MCF 10A (cell line): ENCODE measurements at regions of chr13 and their contacts with region 1.

Region 1: GRCh38 chr13:59906413-59907049 is 257.2 kb downstream of the DIAPH3 start:
- DNase-seq: peak; percentile 43
- H3K4me3 Mint-ChIP-seq: no peak overlapping the region
- H3K27ac Mint-ChIP-seq: no peak overlapping the region
- H3K4me1 Mint-ChIP-seq: peaks cover 6% of the 10 kb centered on the region
- H3K27me3 Mint-ChIP-seq: no peaks in the 10 kb centered on the region
- CTCF ChIP-seq: peak; percentile 50

Region 2: DNA sequence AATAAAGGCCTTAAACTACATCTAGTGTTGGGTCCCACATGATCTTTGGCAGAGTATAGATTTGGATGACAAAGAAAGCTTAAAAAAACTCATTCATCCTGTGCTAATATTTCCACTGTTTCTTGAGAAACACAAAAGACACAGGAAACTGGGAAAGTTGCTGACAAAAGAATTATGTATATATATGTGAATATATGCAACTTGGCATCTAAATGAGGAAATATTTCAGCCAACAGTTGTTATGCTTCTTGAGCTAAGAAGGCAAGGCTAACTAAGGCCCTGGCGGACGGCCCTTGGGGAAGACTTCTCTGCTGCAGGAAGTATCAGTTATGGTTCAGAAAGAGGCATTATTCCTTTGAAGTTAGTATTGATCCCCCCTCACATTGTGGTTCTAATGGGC is 234.7 kb before region 1 on chr13:
- CTCF ChIA-PET with region 1: interaction called, 72 read pairs
- POLR2A ChIA-PET with region 1: no interaction called
- intact Hi-C with region 1: no loop called
- DNase-seq: no peak
- H3K4me3 Mint-ChIP-seq: no peak overlapping the region
- H3K27ac Mint-ChIP-seq: no peak overlapping the region
- H3K4me1 Mint-ChIP-seq: no peaks in the 10 kb centered on the region
- H3K27me3 Mint-ChIP-seq: no peaks in the 10 kb centered on the region
- CTCF ChIP-seq: no peak

Region 3: GRCh38 chr13:59771272-59771671 is 135.3 kb before region 1 on chr13:
- CTCF ChIA-PET with region 1: interaction called, 17 read pairs
- POLR2A ChIA-PET with region 1: no interaction called
- intact Hi-C with region 1: loop called (anchors 5 kb)
- DNase-seq: no peak
- H3K4me3 Mint-ChIP-seq: no peak overlapping the region
- H3K27ac Mint-ChIP-seq: no peak overlapping the region
- H3K4me1 Mint-ChIP-seq: peaks cover 12% of the 10 kb centered on the region
- H3K27me3 Mint-ChIP-seq: no peaks in the 10 kb centered on the region
- CTCF ChIP-seq: peak; percentile 39

Region 4: DNA sequence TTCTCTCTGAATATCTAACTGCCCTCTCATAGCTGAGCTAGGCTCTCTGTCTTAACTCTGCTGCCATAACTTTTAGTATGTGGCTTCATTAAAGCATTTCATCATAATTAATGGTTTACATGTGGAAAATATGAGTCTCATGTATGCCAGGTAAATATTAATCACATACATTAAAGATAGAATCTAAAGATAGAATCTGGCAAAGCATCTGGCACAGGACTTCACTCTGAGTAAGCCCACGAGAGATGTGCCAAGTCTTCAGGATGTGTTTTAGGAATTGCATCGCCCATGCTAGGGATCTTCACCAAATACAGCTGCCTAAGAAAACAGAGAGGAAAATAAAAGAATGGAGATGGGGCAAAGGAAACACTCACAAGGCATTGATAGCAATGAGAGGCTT is 28.6 kb before region 1 on chr13:
- CTCF ChIA-PET with region 1: interaction called, 14 read pairs
- POLR2A ChIA-PET with region 1: no interaction called
- intact Hi-C with region 1: no loop called
- DNase-seq: peak; percentile 45
- H3K4me3 Mint-ChIP-seq: no peak overlapping the region
- H3K27ac Mint-ChIP-seq: no peak overlapping the region
- H3K4me1 Mint-ChIP-seq: peaks cover 16% of the 10 kb centered on the region
- H3K27me3 Mint-ChIP-seq: no peaks in the 10 kb centered on the region
- CTCF ChIP-seq: no peak

Region 5: GRCh38 chr13:60178327-60178726 is 271.8 kb after region 1 on chr13:
- CTCF ChIA-PET with region 1: no interaction called
- POLR2A ChIA-PET with region 1: no interaction called
- intact Hi-C with region 1: no loop called
- DNase-seq: no peak
- H3K4me3 Mint-ChIP-seq: no peak overlapping the region
- H3K27ac Mint-ChIP-seq: no peak overlapping the region
- H3K4me1 Mint-ChIP-seq: no peaks in the 10 kb centered on the region
- H3K27me3 Mint-ChIP-seq: no peaks in the 10 kb centered on the region
- CTCF ChIP-seq: no peak

Region 6: DNA sequence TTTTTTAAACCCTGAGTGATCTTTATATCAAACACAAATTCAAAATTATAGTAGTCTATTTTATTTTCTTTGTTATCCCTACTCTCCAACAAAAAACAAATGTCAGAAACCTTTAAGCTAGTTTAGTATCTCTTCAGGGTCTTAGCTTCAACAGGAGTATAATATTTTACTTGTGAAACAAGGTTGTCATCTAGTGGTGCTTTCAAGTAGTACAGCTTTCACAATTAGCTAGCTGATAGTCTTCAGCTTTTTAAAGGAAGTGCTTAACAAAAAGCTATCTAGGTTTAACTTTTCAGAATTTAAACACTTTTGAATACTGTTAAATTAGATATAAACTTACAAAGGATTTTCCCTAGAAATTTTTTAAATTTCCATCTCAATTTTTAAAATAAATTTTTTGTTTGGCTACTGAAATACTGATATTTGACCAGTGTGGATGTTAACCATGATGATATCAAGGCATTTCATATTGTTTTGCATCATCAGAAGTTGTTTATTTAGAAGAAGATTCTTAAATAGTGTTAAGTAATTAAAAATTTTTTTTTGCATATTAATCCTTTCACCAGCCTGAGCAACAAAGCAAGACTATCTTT is 524.7 kb after region 1 on chr13:
- CTCF ChIA-PET with region 1: interaction called, 3 read pairs
- POLR2A ChIA-PET with region 1: no interaction called
- intact Hi-C with region 1: loop called (anchors 5 kb)
- DNase-seq: peak; percentile 55
- H3K4me3 Mint-ChIP-seq: no peak overlapping the region
- H3K27ac Mint-ChIP-seq: no peak overlapping the region
- H3K4me1 Mint-ChIP-seq: no peaks in the 10 kb centered on the region
- H3K27me3 Mint-ChIP-seq: no peaks in the 10 kb centered on the region
- CTCF ChIP-seq: peak; percentile 82